ENCODE measurements at regions of chr2 and their contacts with region 1.

Region 1: DNA sequence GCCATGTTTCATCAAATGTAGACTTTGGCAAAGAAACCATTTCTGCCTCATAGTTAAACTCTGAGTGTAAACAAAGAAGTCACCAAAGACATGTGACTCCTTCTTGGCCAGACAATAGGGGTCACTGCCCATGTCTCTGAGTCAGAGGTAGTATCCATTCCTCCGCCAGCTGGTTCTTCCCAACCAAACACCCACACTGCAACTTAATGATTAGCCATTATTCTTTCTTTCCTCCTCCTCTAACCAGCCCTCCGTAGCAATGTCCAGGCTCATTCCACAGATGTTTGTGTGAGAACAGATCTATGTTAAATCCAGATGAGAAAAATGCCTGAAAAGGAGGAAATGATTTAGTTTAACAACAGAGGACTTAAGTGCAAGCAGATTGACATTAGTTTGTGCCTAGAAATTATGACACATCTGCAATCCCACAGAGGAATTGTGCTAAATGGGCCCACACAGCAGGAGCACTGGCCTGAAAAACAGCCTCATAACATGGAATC is 127.9 kb upstream of the SH3BP4 start:
- DNase-seq: no peak

Region 2: DNA sequence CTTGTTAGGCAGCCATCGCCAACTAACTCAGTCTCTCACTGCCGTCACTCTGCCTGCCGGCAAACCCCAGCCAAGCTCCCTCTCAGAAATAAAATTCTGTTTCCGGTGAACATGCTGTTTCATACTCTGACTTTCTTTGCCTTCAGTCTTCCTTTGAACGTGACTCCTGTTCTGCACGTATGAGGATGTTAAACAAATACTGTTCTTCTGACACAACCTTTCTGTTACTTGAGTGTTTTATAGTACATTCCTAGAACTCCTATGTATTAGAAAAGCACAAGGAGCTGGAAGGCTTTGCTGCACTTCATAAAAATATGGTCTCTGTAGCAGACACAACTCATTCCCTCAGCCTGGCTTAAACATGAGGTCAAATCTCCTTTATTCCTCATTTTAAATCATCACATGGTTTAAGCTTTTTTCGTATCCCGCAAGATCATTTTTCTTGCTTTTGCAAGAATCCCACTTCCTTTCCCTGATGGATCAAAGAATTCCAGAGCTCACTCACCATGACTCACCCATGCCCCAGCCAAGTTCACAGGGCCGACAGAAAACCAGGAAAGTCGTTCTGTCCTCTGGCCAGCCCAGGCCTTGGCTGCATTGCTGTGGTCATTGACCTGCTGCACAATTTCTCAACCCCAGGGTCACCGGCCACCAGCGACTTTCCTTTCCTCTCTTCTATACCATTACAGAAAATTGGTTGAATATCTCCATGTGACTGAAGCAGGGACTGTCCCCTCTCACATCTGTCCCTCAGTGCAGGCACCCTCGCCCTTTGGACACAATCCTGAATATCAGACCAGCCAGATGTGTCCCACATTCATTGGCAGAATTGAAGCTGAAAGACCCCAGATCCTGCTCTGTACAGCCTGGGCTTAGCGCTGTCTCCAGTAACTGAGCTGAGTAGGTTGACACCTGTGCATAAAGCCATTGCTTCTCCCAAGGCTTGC is 143.9 kb before region 1 on chr2:
- intact Hi-C with region 1: loop called (anchors 10 kb)
- DNase-seq: peak; percentile 83

Region 3: GRCh38 chr2:235116885-235117492 is 293.1 kb after region 1 on chr2:
- intact Hi-C with region 1: no loop called
- DNase-seq: no peak

Measured in cardiac septum (tissue), 1 donor.